Mammary epithelial cell (primary cell): ENCODE measurements at regions of chr21 and their contacts with region 1.

Region 1: GRCh38 chr21:28509031-28509430 is 483.6 kb downstream of the LTN1 start:
- DNase-seq: no peak
- H3K4me3 ChIP-seq: no peak overlapping the region
- H3K27ac ChIP-seq: no peak overlapping the region
- H3K4me1 ChIP-seq: no peaks in the 10 kb centered on the region
- H3K27me3 ChIP-seq: no peaks in the 10 kb centered on the region
- CTCF ChIP-seq: no peak

Region 2: DNA sequence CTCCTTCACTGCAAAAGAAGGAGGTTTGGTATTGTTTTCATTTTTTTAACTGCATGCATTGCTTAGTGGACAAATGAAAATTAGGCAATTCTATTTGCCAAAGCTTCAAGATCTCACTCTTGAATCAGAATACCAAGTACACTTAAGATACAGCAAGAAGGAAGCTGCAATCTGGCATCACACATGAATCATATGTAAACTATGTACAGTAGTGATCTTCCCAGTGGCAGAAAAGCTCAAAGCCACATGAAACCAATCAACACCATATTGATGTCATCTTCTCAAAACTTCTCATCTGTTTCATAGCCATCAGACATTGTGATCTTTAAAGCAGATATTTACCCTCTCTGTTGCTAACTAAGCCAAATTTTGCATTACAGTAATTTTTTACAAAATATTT is 66.4 kb before region 1 on chr21:
- CTCF ChIA-PET with region 1: no interaction called
- dilution Hi-C with region 1: no loop called
- in situ Hi-C with region 1: no loop called
- intact Hi-C with region 1: no loop called
- DNase-seq: peak; percentile 14
- H3K4me3 ChIP-seq: no peak overlapping the region
- H3K27ac ChIP-seq: no peak overlapping the region
- H3K4me1 ChIP-seq: no peaks in the 10 kb centered on the region
- H3K27me3 ChIP-seq: no peaks in the 10 kb centered on the region
- CTCF ChIP-seq: no peak

Region 3: GRCh38 chr21:28590676-28591075 is 81.6 kb after region 1 on chr21:
- CTCF ChIA-PET with region 1: no interaction called
- dilution Hi-C with region 1: loop called (anchors 5 kb)
- in situ Hi-C with region 1: no loop called
- intact Hi-C with region 1: no loop called
- DNase-seq: no peak
- H3K4me3 ChIP-seq: no peak overlapping the region
- H3K27ac ChIP-seq: no peak overlapping the region
- H3K4me1 ChIP-seq: no peaks in the 10 kb centered on the region
- H3K27me3 ChIP-seq: no peaks in the 10 kb centered on the region
- CTCF ChIP-seq: no peak